GM12878 (cell line): ENCODE measurements at regions of chr14 and their contacts with region 1.

Region 1: GRCh38 chr14:95185033-95185766 is 27.9 kb upstream of the DICER1 start:
- DNase-seq: no peak
- ATAC-seq: no peak
- H3K4me3 ChIP-seq: no peak overlapping the region
- H3K27ac ChIP-seq: no peak overlapping the region
- H3K4me1 ChIP-seq: no peaks in the 10 kb centered on the region
- H3K27me3 ChIP-seq: no peaks in the 10 kb centered on the region
- CTCF ChIP-seq: no peak
- EP300 ChIP-seq: no peak
- POLR2A ChIP-seq: no peak
- RAD21 ChIP-seq: no peak

Region 2: GRCh38 chr14:95150910-95151309 is 34.3 kb before region 1 on chr14:
- CTCF ChIA-PET with region 1: interaction called, 4 read pairs
- POLR2A ChIA-PET with region 1: interaction called, 9 read pairs
- RAD21 ChIA-PET with region 1: interaction called, 7 read pairs
- SMC1A ChIA-PET with region 1: interaction called, 16 read pairs
- in situ Hi-C with region 1: no loop called
- intact Hi-C with region 1: no loop called
- DNase-seq: no peak
- ATAC-seq: peak; percentile 16; the same call in 2 of the 3 replicates
- H3K4me3 ChIP-seq: 0 out of 2 replicates have a peak overlapping the region, but pooled peaks have one; percentile 21
- H3K27ac ChIP-seq: peak overlapping the region; percentile 6; the same call in 1 of the 2 replicates
- H3K4me1 ChIP-seq: peaks cover 8% of the 10 kb centered on the region
- H3K27me3 ChIP-seq: no peaks in the 10 kb centered on the region
- CTCF ChIP-seq: no peak
- EP300 ChIP-seq: no peak
- POLR2A ChIP-seq: no peak
- RAD21 ChIP-seq: no peak

Region 3: DNA sequence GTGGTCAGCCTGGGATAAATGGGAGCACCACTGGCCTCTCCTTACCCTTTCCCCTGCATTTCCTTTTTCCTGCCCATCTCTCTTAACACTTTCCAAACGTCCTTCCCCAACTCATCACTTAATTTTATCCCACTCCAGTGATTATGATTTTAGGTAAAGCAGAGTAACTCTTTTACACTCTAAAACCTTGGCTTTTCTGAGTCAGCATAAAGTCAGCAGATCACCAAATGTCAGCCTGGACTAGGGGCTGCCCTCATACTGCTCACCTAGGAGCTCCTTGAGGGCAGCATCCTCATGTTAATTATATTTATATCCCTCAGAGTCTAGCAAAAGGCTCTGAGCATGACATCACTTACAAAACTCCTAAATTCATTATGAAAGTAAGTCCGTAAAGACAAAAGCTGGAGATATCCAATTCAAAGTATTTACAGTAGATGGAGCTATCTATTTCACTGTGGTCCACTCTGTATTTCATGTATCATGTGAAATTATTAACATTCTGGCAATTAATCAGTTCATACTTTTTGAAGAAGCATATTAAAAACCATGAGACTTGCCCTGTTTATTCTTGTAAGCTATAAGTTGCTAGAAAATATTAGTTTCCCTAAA is 10.9 kb before region 1 on chr14:
- CTCF ChIA-PET with region 1: interaction called, 6 read pairs
- POLR2A ChIA-PET with region 1: interaction called, 4 read pairs
- RAD21 ChIA-PET with region 1: interaction called, 9 read pairs
- SMC1A ChIA-PET with region 1: interaction called, 36 read pairs
- in situ Hi-C with region 1: no loop called
- intact Hi-C with region 1: no loop called
- DNase-seq: no peak
- ATAC-seq: peak; percentile 73
- H3K4me3 ChIP-seq: no peak overlapping the region
- H3K27ac ChIP-seq: no peak overlapping the region
- H3K4me1 ChIP-seq: no peaks in the 10 kb centered on the region
- H3K27me3 ChIP-seq: no peaks in the 10 kb centered on the region
- CTCF ChIP-seq: peak in 1 of 3 experiments; percentile 29; a peak in 1 of 6 replicates
- EP300 ChIP-seq: no peak
- POLR2A ChIP-seq: no peak
- RAD21 ChIP-seq: peak; percentile 43; the same call in 1 of the 2 replicates

Region 4: DNA sequence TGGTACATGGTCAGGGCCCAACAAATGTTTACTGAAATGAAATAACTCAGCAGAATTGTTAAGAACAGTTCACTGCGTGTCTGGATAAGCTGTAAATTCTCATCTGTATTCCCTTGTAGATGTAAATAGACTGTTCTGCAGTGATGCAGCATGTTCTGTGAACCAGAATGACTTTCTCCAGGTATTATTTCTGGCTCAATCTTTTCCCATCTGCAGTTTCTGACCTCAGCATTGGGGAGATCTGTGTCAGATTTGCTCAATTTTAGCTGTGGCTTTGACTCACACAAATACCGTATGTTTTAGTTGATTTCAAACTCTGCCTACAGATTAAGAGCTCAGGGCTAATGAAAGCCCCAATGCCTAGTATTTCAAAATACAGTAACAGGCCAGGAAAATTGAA is 21.3 kb after region 1 on chr14:
- CTCF ChIA-PET with region 1: interaction called, 8 read pairs
- POLR2A ChIA-PET with region 1: interaction called, 3 read pairs
- RAD21 ChIA-PET with region 1: interaction called, 23 read pairs
- SMC1A ChIA-PET with region 1: interaction called, 20 read pairs
- in situ Hi-C with region 1: no loop called
- intact Hi-C with region 1: no loop called
- DNase-seq: no peak
- ATAC-seq: no peak; the same call in 2 of the 3 replicates
- H3K4me3 ChIP-seq: no peak overlapping the region
- H3K27ac ChIP-seq: no peak overlapping the region
- H3K4me1 ChIP-seq: peaks cover 7% of the 10 kb centered on the region; the same call in 1 of the 2 replicates
- H3K27me3 ChIP-seq: no peaks in the 10 kb centered on the region
- CTCF ChIP-seq: no peak
- EP300 ChIP-seq: no peak
- POLR2A ChIP-seq: no peak
- RAD21 ChIP-seq: no peak

Region 5: DNA sequence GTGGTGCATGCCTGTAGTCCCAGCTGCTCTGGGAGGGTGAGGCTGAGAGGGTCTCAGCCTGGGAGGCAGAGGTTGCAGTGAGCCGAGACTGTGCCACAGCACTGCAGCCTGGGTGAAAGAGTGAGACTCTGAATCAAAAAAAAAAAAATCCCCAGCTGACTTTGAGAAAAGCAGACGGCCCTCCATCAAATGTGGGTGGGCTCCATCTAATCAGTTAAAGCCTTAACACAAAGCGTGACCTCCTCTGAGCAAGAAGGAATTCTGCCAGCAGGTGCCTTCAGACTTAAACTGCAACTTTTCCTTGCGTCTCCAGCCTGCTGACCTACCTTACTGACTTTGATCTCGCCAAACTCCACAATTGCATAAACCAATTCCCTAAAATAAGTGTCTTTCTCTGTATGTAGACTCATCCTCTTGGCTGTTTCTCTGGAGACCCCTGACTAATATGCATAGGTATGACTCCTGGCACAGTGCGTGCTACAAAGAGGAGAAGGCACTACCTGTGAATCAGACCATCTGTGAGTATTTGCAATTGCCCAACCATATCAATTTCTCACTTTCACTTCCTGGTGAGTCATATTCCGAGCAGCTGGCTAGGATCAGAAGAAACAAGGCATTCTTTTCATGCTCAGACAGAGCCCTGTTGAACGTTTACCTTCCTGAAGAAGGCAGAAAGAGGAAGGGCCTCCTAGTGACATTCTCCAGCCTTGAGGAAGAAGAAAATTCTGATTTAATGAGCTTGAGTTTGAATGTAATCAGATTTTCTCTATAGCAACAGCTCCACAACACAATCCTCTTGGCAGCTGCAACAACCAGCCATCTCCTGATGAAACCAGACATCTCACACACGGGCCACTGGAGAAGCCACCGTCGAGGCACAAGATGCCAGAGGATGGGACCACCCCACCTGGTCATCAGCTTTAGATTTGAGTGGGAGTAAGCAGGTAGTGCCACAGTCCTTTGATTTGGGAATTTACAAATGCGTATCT is 80.2 kb after region 1 on chr14:
- CTCF ChIA-PET with region 1: interaction called, 4 read pairs
- POLR2A ChIA-PET with region 1: no interaction called
- RAD21 ChIA-PET with region 1: interaction called, 4 read pairs
- SMC1A ChIA-PET with region 1: interaction called, 13 read pairs
- in situ Hi-C with region 1: no loop called
- intact Hi-C with region 1: no loop called
- DNase-seq: peak; percentile 96
- ATAC-seq: peak; percentile 91
- H3K4me3 ChIP-seq: peak overlapping the region; percentile 54; the same call in 1 of the 2 replicates
- H3K27ac ChIP-seq: peak overlapping the region; percentile 92
- H3K4me1 ChIP-seq: peaks cover 49% of the 10 kb centered on the region
- H3K27me3 ChIP-seq: no peaks in the 10 kb centered on the region
- CTCF ChIP-seq: no peak
- EP300 ChIP-seq: peak; percentile 98 to 100
- POLR2A ChIP-seq: no peak
- RAD21 ChIP-seq: peak; percentile 38; the same call in 1 of the 2 replicates

Region 6: GRCh38 chr14:95495538-95496025 is 310.4 kb after region 1 on chr14:
- CTCF ChIA-PET with region 1: no interaction called
- POLR2A ChIA-PET with region 1: no interaction called
- RAD21 ChIA-PET with region 1: no interaction called
- SMC1A ChIA-PET with region 1: no interaction called
- in situ Hi-C with region 1: no loop called
- intact Hi-C with region 1: no loop called
- DNase-seq: peak; percentile 94
- ATAC-seq: peak; percentile 90
- H3K4me3 ChIP-seq: peak overlapping the region; percentile 37; the same call in 1 of the 2 replicates
- H3K27ac ChIP-seq: peak overlapping the region; percentile 98
- H3K4me1 ChIP-seq: peaks cover 60% of the 10 kb centered on the region
- H3K27me3 ChIP-seq: no peaks in the 10 kb centered on the region
- CTCF ChIP-seq: no peak
- EP300 ChIP-seq: peak; percentile 66 to 95
- POLR2A ChIP-seq: peak; percentile 66
- RAD21 ChIP-seq: peak; percentile 17; the same call in 1 of the 2 replicates